Right ventricle myocardium superior (tissue), 1 donor: ENCODE measurements at regions of chr3 and their contacts with region 1.

Region 1: GRCh38 chr3:126293370-126294082 is 63.7 kb downstream of the KLF15 start:
- DNase-seq: peak; percentile 67
- ATAC-seq: peak; percentile 90

Region 2: GRCh38 chr3:126357295-126358037 is 63.9 kb after region 1 on chr3 and contains the start of gene KLF15:
- intact Hi-C with region 1: loop called (anchors 5 kb)
- DNase-seq: peak; percentile 92
- ATAC-seq: peak; percentile 79
- total RNA-seq, gene KLF15: 34.0 TPM